ENCODE measurements at regions of chr4 and their contacts with region 1.

Region 1: GRCh38 chr4:174631901-174632758 is 109.8 kb upstream of the HPGD start:
- DNase-seq: peak; percentile 22
- ATAC-seq: no peak
- H3K4me3 ChIP-seq: no peak overlapping the region
- H3K27ac ChIP-seq: no peak overlapping the region
- H3K4me1 ChIP-seq: no peaks in the 10 kb centered on the region
- H3K27me3 ChIP-seq: no peaks in the 10 kb centered on the region
- CTCF ChIP-seq: peak; percentile 61; the same call in 1 of the 2 replicates

Region 2: DNA sequence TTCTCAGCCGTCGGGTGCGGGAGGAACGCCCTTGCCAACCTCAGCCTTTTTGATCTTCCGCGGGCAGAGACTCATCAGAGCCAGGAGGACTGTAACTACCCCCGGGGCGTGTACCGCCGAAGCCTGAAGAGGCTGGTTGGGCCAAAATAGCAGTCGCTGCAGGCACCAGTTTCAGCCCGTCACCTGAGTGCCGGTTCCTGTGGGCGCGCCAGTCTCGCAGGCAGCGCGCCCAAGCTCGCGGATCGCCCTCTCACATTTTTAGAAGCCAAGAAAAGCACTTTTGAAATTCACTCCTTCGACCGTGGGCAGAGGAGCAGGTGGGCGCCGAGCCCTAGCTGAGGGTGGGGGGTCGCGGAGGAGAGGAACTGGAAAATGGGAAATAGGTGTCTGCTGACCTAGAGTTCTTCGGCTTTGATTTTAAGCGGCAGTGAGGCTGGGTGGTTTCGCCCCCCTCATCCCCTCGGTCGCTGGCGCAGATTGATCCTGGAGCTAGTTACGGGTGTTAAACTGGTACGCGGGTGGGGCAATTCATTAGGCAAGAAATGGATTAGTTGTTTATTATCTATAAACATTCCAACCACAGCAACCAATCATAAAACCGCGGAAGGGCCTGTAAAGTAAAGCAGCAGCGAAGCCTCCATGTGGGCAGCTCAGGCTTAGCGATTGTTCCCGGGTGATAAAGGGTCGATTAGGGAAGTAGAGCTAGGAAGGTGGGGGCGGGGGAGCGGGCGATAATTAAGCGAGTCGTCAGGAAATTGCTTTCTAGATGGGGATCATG is 417.8 kb before region 1 on chr4:
- CTCF ChIA-PET with region 1: no interaction called
- POLR2A ChIA-PET with region 1: no interaction called
- in situ Hi-C with region 1: no loop called
- intact Hi-C with region 1: loop called (anchors 5 kb)
- DNase-seq: no peak
- ATAC-seq: no peak
- H3K4me3 ChIP-seq: peak overlapping the region; percentile 4 to 30; a peak in 3 of 4 replicates
- H3K27ac ChIP-seq: no peak overlapping the region
- H3K4me1 ChIP-seq: no peaks in the 10 kb centered on the region
- H3K27me3 ChIP-seq: no peaks in the 10 kb centered on the region
- CTCF ChIP-seq: no peak

Region 3: DNA sequence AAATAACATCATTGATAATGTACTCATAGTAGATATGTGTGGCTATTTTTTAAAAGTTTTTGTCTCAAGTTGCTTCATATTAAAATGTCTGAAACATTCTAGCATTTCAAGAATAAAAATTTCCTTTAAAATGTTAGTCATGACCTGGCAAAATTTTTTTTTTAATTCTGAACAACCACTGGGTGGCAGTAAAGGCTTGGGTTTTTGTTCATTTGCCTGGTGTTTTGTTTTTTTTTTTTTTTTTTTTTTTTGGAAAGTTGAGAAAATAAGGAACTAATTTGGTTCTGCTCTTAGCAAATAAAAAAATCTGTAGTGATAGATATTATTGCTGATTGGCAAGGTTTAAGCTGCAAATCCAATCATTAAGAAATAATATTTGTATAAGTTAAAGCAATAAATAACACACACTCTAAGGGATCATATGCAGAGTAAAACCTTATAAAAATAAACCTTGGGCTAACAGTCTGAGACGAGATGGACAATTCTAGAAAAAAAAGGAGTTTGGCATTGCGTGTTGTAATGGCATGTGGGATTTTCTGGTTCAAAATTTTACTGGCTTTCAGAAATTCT is 267.0 kb before region 1 on chr4:
- CTCF ChIA-PET with region 1: no interaction called
- POLR2A ChIA-PET with region 1: no interaction called
- in situ Hi-C with region 1: no loop called
- intact Hi-C with region 1: loop called (anchors 1 kb)
- DNase-seq: no peak
- ATAC-seq: no peak
- H3K4me3 ChIP-seq: no peak overlapping the region
- H3K27ac ChIP-seq: no peak overlapping the region
- H3K4me1 ChIP-seq: no peaks in the 10 kb centered on the region
- H3K27me3 ChIP-seq: no peaks in the 10 kb centered on the region
- CTCF ChIP-seq: peak; percentile 34; the same call in 1 of the 2 replicates

Measured in Panc1 (cell line).